PC-3 (cell line): ENCODE measurements at regions of chr2 and their contacts with region 1.

Region 1: DNA sequence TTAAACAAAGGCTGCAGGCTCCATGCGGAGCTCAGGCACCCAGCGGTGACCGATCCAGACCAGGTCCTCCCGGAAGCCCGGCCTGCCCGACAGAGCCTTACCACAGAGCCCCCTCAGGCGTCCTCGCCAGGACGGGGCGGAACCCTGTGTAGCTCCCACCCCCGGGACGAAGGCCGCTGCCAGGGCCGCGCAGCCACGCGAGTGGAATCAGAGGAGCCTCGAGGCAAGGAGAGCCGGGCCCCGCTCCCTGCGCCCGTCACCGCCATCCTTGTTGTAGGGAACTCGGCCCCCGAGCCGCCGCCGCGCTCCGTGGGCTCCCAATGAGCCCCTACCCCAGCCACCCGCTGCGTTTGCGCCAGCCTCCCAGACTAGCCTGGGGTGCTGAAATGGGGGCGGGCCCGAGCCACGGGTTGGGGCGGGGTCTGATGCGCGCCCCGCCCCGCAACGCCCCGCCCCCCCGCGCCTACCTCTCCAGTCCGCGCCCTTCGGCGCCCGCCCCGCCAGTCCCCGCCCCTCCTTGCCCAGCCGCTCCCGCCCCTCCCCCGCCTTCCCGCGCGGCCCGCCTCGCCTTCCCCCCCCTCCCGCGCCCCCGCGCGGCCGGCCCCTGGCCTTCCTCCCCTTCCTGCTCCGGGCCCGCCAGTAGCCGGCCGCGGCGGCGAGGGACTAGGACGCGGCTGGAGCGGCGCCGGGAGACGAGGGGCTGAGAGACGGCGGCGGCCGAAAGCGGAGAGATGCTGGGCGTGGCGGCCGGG is at the start of gene LIMS1:
- DNase-seq: peak; percentile 91
- ATAC-seq: peak; percentile 81
- H3K4me3 ChIP-seq: peak within 1 kb of the TSS; percentile 85
- H3K27ac ChIP-seq: peak within 1 kb of the TSS; percentile 86
- H3K4me1 ChIP-seq: peaks cover 31% of the 10 kb centered on the region
- H3K27me3 ChIP-seq: no peaks in the 10 kb centered on the region
- CTCF ChIP-seq: no peak
- total RNA-seq, gene LIMS1: 58.9 and 62.7 TPM in 2 replicates

Region 2: GRCh38 chr2:108271691-108272253 is 262.2 kb before region 1 on chr2:
- CTCF ChIA-PET with region 1: no interaction called
- POLR2A ChIA-PET with region 1: no interaction called
- intact Hi-C with region 1: no loop called
- DNase-seq: peak; percentile 86
- ATAC-seq: peak; percentile 78
- H3K4me3 ChIP-seq: peak overlapping the region; percentile 60
- H3K27ac ChIP-seq: peak overlapping the region; percentile 73
- H3K4me1 ChIP-seq: peaks cover 37% of the 10 kb centered on the region
- H3K27me3 ChIP-seq: no peaks in the 10 kb centered on the region
- CTCF ChIP-seq: no peak

Region 3: DNA sequence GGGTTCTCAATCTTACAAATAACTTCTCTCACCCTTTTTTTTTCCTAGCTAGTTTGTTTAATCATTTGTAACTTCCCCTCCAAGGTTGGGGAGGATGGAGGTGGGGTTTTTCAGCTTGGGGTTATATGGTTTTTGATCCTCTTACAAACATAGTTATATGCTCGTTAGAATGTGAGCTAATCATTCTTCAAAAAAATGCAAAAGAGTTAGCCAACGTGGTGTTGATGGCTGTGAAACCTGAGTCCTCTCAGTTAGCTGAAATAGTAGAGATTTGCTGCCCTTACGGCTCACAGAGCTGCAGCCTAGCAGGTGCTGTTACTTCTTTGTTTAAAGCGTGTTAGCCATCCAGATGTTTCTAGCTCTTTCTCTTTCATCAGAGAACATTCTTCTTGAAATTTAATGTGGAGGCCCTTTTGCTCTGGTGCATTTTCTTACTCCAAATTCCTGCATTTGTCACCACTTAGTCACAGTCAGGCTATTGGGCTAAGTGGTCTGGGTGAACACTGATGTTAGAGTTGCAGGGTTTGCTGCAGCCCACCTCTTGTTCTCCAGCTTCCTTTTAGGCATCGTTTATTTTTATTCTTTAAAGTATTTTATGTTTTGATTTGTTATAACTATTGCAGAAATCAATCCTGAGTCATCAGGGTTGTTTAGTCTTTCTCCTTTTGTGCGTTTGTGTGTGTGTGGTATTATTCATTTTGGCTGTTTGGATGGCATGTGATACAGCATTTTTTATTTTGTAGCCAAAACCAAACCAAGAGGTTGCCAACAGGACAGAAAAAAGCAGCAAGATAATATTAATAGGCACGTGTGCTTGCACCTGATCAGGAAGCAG is 41.3 kb after region 1 on chr2:
- CTCF ChIA-PET with region 1: no interaction called
- POLR2A ChIA-PET with region 1: interaction called, 5 read pairs
- intact Hi-C with region 1: loop called (anchors 2 kb)
- DNase-seq: peak; percentile 58
- ATAC-seq: no peak
- H3K4me3 ChIP-seq: no peak overlapping the region
- H3K27ac ChIP-seq: no peak overlapping the region
- H3K4me1 ChIP-seq: peaks cover 58% of the 10 kb centered on the region
- H3K27me3 ChIP-seq: no peaks in the 10 kb centered on the region
- CTCF ChIP-seq: no peak